ENCODE measurements at regions of chr19 and their contacts with region 1.

Region 1: DNA sequence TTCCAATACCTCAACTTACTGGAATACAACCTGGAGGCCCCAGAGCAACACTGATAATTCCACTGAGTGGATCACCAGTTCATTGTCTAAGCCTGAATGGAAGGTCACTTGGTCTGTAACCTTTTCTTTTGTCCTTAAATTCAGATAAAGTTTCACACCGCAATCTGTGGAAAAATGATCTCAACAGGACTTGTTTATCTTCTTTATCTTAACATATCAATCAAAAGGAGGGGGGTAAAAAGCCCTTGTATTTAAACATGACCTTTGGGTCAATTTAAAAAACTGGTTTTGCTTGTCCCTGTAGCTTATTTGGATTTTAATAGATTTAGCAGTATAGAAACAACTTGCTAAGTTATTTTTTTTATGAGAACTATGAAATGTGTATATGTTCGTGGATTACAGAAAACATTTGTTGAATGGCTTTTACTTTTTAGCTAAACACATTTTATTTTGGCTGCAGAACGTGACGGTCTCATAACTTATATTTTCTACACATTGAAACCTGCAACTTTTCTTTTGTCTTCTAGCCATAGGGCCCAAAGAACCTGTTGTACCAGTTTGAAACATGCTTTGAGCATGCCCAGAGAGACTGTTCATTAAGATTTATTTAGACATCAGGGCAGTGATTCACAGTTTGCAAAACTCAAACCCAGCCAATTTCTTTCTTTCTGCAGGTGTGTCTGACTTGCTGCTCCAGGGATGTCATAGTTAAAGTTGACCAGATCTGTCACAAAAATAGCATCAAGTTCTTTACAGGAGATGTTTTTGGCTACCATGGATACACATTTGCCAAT is 21.8 kb downstream of the SAE1 start:
- DNase-seq: no peak
- ATAC-seq: no peak
- H3K4me3 ChIP-seq: no peak overlapping the region
- H3K4me3 Mint-ChIP-seq: no peak overlapping the region
- H3K27ac ChIP-seq: no peak overlapping the region
- H3K27ac Mint-ChIP-seq: peak overlapping the region in 3 of 9 donors; percentile 60 to 88 (median 61)
- H3K4me1 ChIP-seq: peaks cover 24 to 53% of the 10 kb centered on the region in 2 donors
- H3K4me1 Mint-ChIP-seq: peaks cover 26 to 75% (median 61%) of the 10 kb centered on the region in 7 donors
- H3K27me3 ChIP-seq: no peaks in the 10 kb centered on the region
- H3K27me3 Mint-ChIP-seq: no peaks in the 10 kb centered on the region

Region 2: DNA sequence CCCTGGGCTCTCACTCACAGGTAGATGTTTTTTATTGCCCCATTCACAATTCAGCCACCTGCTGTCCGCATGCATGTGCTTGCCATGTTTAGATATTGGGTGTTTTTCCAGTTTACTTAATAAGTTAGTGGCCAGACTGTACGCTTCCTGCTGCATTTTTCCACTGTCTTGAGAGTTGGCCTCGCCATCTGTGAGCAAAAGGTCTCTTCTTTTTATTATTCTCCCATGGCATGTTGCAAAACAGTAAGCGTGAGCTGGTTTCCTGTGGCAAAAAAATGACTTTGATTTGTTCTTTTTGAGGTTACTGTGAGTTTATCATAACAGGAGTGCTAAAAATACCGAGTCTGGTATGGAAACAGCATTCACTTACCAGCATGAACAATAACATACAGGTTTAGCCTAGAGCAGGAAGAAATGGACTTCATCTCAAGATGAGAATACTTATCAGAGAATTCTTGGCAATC is 24.2 kb after region 1 on chr19:
- CTCF ChIA-PET with region 1: interaction called, 16 read pairs
- POLR2A ChIA-PET with region 1: interaction called, 386 read pairs
- intact Hi-C with region 1: no loop called
- DNase-seq: peak in 8 of 9 donors; percentile 44 to 83 (median 79)
- ATAC-seq: peak; percentile 90
- H3K4me3 ChIP-seq: peak overlapping the region; percentile 28
- H3K4me3 Mint-ChIP-seq: peak overlapping the region; percentile 73 to 89 (median 81)
- H3K27ac ChIP-seq: peak overlapping the region; percentile 58
- H3K27ac Mint-ChIP-seq: peak overlapping the region; percentile 87 to 98 (median 96)
- H3K4me1 ChIP-seq: peaks cover 40 to 55% of the 10 kb centered on the region in 2 donors
- H3K4me1 Mint-ChIP-seq: peaks cover 40 to 85% (median 76%) of the 10 kb centered on the region in 7 donors
- H3K27me3 ChIP-seq: no peaks in the 10 kb centered on the region
- H3K27me3 Mint-ChIP-seq: no peaks in the 10 kb centered on the region

Region 3: GRCh38 chr19:47190167-47190727 is 37.8 kb after region 1 on chr19:
- CTCF ChIA-PET with region 1: interaction called, 54 read pairs
- POLR2A ChIA-PET with region 1: interaction called, 386 read pairs
- intact Hi-C with region 1: loop called (anchors 1 kb)
- DNase-seq: peak in 8 of 9 donors; percentile 52 to 77 (median 64)
- ATAC-seq: peak; percentile 53
- H3K4me3 ChIP-seq: no peak overlapping the region
- H3K4me3 Mint-ChIP-seq: peak overlapping the region; percentile 48 to 83 (median 72)
- H3K27ac ChIP-seq: peak overlapping the region; percentile 25
- H3K27ac Mint-ChIP-seq: peak overlapping the region; percentile 72 to 98 (median 95)
- H3K4me1 ChIP-seq: peaks cover 37 to 77% of the 10 kb centered on the region in 2 donors
- H3K4me1 Mint-ChIP-seq: peaks cover 41 to 81% (median 71%) of the 10 kb centered on the region in 7 donors
- H3K27me3 ChIP-seq: no peaks in the 10 kb centered on the region
- H3K27me3 Mint-ChIP-seq: no peaks in the 10 kb centered on the region

Region 4: DNA sequence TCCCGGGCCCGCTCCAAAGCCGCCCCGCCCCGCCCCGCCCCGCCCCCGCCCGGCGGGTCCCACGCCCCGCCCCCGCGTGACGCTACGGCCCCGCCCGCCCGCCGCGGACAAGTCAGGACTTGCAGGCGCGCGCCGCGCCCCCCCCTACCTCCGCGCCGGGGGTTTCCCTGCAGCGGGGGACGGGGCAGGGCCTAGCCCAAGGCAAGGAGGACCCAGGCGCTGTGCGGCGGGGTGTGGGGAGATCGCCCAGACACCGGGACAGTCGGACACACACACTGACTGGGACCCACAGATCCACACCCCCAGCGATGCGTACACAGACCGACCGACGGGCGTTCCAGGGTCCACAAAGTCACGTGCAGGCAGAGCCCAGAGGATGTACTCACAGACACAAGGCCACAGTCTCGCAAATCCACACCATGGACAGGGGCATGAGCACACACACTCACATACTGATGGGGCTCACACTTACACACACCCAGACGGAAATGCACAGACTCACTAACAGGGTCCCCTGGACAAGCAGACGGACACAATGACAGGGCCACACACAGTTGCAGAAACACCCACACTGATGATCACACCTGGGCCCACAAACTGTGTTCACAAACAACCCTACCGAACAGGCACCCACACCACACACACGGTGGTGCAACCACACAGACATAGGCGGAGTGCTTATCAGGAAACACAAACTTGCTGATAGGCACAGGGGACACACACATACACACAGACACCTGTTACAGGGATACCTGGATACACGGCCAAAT is 79.0 kb after region 1 on chr19:
- CTCF ChIA-PET with region 1: no interaction called
- POLR2A ChIA-PET with region 1: interaction called, 16 read pairs
- intact Hi-C with region 1: loop called (anchors 1 to 5 kb)
- DNase-seq: peak; percentile 77 to 94 (median 86)
- ATAC-seq: peak; percentile 78
- H3K4me3 ChIP-seq: peak overlapping the region; percentile 54
- H3K4me3 Mint-ChIP-seq: peak overlapping the region in 9 of 10 donors; percentile 69 to 88 (median 81)
- H3K27ac ChIP-seq: peak overlapping the region; percentile 80
- H3K27ac Mint-ChIP-seq: peak overlapping the region; percentile 20 to 92 (median 90)
- H3K4me1 ChIP-seq: peaks cover 36 to 45% of the 10 kb centered on the region in 2 donors
- H3K4me1 Mint-ChIP-seq: peaks cover 20 to 29% (median 24%) of the 10 kb centered on the region in 7 donors
- H3K27me3 ChIP-seq: no peaks in the 10 kb centered on the region
- H3K27me3 Mint-ChIP-seq: peaks cover 0 to 4% (median 0%) of the 10 kb centered on the region in 5 donors

Region 5: DNA sequence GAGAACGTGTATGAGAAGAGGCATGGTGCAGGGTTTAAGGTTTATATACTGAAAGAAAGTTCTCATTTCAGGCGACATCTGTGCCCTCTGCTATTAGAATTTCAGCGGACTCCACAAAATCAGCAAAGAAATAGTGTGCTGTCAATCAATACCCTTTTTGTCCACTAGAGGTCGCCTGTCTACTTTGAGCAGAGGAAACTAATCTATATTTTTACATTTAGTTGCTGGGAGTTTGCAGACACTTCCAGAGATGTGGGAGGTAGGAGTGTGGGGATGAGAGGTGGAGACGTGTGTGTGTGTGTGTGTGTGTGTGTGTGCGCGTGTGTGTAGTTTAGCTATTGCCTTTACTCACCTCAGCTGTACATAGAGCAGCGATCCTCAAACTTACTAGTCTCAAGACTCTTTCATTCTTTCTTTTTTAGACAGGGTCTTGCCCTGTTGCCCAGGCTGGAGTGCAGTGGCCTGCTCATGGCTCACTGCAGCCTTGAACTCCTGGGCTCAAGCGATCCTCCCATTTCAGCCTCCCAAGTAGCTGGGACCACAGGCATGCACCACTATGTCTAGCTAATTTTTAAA is 132.0 kb after region 1 on chr19:
- CTCF ChIA-PET with region 1: interaction called, 12 read pairs
- POLR2A ChIA-PET with region 1: no interaction called
- intact Hi-C with region 1: no loop called
- DNase-seq: peak in 7 of 9 donors; percentile 32 to 78 (median 61)
- ATAC-seq: peak; percentile 72
- H3K4me3 ChIP-seq: no peak overlapping the region
- H3K4me3 Mint-ChIP-seq: no peak overlapping the region
- H3K27ac ChIP-seq: no peak overlapping the region
- H3K27ac Mint-ChIP-seq: no peak overlapping the region
- H3K4me1 ChIP-seq: no peaks in the 10 kb centered on the region
- H3K4me1 Mint-ChIP-seq: peaks cover 0 to 16% (median 6%) of the 10 kb centered on the region in 7 donors
- H3K27me3 ChIP-seq: no peaks in the 10 kb centered on the region
- H3K27me3 Mint-ChIP-seq: no peaks in the 10 kb centered on the region

Measured in naive thymus-derived CD4-positive, alpha-beta T cell (primary cell).